ENCODE measurements at regions of chr17 and their contacts with region 1.

Region 1: GRCh38 chr17:74748529-74749365 is at the start of gene NHERF1:
- H3K4me3 Mint-ChIP-seq: peak within 1 kb of the TSS; percentile 94
- H3K27ac Mint-ChIP-seq: peak within 1 kb of the TSS; percentile 79
- H3K4me1 Mint-ChIP-seq: peaks cover 74% of the 10 kb centered on the region
- H3K27me3 Mint-ChIP-seq: no peaks in the 10 kb centered on the region

Region 2: DNA sequence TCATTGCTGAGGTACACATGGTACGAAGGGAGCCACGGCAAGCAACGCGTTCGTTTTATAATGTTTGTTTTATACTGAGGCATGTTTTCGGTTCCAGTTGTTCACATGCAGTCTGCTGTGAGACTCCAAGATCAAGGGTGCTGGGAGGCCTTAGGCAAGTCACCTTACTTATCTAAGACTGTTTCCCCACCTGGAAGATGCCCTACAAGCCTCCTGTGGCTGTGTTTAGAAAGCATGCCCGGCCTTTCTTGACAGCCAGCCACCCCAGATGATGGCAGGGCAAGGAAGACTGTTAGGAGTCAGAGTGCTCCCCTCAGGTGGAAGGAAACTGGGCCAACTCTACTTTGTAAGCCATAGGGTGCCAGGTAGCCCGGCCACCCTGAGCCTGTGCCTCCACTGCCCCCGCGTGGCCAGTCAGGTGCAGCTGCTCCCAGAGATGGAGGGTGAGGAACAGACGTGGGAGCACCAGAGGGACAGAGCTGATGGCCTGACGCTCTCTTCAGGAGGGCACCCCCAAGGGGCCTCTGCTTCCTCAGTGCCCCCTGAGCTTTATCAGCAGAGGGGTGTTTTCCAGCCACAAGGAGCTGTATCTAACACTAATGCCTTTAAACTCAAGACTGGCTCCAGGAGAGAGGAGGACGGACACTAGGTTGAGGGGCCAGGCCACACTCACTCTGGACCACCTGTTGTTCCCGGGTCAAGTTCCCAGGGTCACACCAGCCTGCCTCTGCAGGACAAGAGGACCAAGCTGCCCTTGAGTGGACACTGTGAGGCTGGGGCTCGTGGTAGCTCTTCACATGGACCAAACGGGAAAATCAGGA is 22.0 kb after region 1 on chr17:
- intact Hi-C with region 1: loop called (anchors 2 kb)
- H3K4me3 Mint-ChIP-seq: no peak overlapping the region
- H3K27ac Mint-ChIP-seq: no peak overlapping the region
- H3K4me1 Mint-ChIP-seq: peaks cover 35% of the 10 kb centered on the region
- H3K27me3 Mint-ChIP-seq: no peaks in the 10 kb centered on the region

Region 3: DNA sequence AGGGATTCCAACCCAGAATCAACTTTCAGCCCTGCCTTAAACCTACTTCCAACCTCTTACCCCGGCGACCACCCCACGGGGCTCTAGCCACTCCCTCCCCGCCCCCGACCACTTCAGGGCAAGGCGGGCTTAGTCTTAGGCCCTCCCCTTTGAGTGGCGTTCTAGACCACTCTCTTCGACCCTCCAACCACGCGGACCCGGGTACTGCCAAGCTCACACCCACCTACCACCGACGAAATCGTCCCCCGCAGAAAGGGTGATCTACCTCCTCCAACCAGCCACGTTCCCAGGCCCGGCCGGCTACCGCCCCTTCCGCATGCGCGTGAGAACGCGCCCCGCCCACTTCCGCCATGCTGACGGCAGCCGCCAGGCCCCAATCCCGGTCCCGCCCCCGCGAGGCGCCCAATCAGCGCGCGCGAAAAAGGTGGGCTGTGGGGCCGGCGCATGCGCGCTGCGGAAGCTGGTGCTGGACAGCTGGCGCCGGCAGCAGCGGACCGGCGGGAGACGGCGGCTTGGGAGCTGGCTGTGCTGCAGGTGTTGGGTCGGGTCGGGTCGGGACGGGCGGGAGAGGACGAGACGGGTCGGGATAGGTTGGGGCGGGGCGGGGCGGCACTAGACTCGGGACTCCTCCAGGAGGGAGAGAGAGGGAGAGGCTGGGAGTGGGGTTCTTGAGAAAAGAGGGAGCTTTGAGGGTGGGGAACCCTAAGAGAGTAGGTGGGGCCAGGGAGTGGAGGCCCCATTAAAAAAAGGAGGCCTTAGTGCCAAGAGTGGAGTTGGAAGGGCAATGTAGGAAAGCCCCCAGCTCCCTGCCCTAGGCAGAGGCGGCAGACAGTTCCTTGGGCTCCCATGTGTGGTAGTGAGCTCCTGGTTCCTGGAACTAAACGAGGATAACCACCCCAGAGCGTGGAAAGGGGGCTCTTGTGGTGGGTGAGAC is 27.6 kb after region 1 on chr17 and contains the start of gene NAT9:
- intact Hi-C with region 1: loop called (anchors 2 kb)
- H3K4me3 Mint-ChIP-seq: peak within 1 kb of the TSS; percentile 96
- H3K27ac Mint-ChIP-seq: peak within 1 kb of the TSS; percentile 94
- H3K4me1 Mint-ChIP-seq: peaks cover 66% of the 10 kb centered on the region
- H3K27me3 Mint-ChIP-seq: no peaks in the 10 kb centered on the region

Region 4: DNA sequence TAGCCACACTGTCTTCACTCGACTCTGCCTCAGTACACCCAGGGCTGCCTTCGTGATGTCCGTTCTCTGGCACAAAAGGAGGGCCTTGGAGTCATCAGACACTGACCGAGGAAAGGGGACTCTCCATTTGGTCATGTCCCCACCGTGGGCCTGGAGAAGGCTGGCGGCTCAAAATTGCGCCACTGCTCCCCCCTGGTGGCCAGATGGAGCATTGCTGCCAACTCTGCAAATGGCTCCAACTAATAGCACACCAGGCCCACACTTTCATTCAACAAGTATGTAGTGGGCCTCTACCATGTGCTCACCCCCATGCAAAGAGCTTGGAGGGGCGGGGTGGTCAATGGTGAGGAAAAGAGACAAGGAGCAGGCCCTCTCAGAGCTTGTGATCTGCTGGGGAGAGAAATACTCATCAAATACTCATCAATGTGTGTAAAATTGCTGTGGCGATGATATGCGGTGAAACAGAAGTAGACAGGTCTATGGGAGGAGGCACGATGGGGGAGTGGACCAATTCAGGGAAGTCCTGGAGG is 116.2 kb after region 1 on chr17:
- intact Hi-C with region 1: loop called (anchors 1 kb)
- H3K4me3 Mint-ChIP-seq: no peak overlapping the region
- H3K27ac Mint-ChIP-seq: no peak overlapping the region
- H3K4me1 Mint-ChIP-seq: peaks cover 33% of the 10 kb centered on the region
- H3K27me3 Mint-ChIP-seq: peaks cover 50% of the 10 kb centered on the region

Region 5: DNA sequence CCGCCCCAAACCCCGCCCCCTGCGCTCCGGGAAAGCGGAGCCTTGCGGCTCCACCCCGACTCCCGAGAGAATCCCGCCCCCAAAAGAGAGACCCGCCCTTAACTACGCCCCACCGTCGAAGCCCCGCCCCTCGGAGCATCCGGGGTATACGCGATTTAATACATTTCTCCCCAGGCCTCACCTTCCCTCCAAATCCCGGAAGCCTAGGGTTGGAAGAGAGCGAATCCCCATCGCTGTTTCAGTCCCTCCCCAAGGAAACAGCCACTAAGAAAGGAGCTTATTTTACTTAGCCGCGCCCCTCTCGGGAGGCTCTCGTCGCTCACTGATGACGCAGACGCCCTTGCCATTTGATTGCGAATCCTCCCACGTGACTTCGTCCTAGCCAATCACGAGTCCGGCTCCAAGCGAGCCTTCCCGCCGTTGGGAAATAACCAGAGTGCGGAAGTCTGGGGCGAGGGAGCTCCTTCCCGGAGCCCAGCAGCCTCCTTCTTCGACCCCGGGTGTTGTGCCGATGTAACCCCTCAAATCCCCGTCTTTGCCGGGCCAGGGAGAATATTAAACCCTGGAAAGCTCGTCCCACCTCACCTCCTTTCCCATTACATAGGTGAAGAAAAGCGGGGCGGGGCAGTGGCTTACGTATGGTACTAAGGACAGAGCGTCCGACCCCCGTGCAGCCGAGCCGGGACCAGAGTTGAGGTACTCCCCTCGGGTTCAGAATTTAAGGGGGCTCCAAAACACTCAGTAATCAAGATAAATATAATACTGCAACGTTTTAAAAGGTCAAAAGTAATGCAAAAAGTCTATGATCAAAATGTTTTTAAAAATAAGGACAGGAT is 124.5 kb after region 1 on chr17:
- intact Hi-C with region 1: loop called (anchors 2 kb)
- H3K4me3 Mint-ChIP-seq: peak overlapping the region; percentile 75
- H3K27ac Mint-ChIP-seq: peak overlapping the region; percentile 88
- H3K4me1 Mint-ChIP-seq: peaks cover 26% of the 10 kb centered on the region
- H3K27me3 Mint-ChIP-seq: peaks cover 22% of the 10 kb centered on the region

Region 6: DNA sequence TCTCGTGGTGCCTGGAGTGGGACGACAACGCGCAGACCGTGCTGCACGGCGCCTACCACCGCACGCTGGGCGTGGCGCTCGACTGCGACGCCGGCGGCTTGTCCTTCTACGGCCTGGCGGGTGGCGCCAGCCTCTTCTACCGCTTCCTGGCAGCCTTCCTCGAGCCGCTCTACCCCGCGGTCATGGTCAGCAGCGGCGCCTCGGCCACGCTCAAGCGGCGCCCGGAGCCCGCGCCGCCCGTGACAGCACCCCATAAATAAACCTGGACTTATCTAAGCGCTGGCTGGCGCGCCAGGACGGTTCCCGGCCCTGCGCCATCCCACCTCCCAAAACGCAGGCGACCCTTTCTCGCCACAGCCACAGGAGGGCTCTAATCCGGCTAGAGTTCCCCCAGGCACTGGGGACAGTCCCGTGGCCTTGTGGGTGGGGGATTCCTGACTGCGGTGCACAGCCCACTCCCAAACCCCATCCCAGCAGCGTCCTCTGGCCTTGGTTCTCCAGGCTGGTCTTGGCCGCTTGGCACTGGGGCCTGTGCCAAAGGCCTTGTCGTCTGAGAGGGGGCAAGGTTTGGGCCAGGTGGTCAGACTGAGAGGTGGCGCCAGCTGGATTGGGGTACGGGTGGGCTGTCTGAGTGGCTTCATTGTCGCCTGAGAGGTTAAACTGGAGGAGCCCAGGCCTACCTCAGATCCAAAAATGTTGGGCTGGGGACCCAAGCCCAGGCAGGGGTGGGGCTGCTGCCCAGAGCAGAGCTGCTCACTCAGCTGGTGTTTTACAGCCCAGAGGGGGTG is 328.9 kb after region 1 on chr17:
- intact Hi-C with region 1: no loop called
- H3K4me3 Mint-ChIP-seq: peak overlapping the region; percentile 72
- H3K27ac Mint-ChIP-seq: peak overlapping the region; percentile 93
- H3K4me1 Mint-ChIP-seq: peaks cover 76% of the 10 kb centered on the region
- H3K27me3 Mint-ChIP-seq: peaks cover 10% of the 10 kb centered on the region

Measured in dendritic cell treated with granulocyte-macrophage colony-stimulating factor and Interleukin-4, amounts not matched to agents 40 ng/mL and 50 ng/mL, for 4 days (primary cell).